Activated CD4-positive, alpha-beta T cell treated with anti-CD3 and anti-CD28 coated beads for 36 hours (primary cell): ENCODE measurements at regions of chr17 and their contacts with region 1.

Region 1: DNA sequence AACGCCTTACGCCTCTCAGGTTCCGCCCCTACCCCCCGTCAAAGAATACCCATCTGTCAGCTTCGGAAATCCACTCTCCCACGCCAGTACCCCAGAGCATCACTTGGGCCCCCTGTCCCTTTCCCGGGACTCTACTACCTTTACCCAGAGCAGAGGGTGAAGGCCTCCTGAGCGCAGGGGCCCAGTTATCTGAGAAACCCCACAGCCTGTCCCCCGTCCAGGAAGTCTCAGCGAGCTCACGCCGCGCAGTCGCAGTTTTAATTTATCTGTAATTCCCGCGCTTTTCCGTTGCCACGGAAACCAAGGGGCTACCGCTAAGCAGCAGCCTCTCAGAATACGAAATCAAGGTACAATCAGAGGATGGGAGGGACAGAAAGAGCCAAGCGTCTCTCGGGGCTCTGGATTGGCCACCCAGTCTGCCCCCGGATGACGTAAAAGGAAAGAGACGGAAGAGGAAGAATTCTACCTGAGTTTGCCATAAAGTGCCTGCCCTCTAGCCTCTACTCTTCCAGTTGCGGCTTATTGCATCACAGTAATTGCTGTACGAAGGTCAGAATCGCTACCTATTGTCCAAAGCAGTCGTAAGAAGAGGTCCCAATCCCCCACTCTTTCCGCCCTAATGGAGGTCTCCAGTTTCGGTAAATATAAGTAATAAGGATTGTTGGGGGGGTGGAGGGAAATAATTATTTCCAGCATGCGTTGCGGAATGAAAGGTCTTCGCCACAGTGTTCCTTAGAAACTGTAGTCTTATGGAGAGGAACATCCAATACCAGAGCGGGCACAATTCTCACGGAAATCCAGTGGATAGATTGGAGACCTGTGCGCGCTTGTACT is at the start of gene BRCA1:
- DNase-seq: peak; percentile 97
- ATAC-seq: peak; percentile 99
- H3K4me3 Mint-ChIP-seq: peak within 1 kb of the TSS; percentile 99
- H3K27ac Mint-ChIP-seq: peak within 1 kb of the TSS; percentile 99
- H3K4me1 Mint-ChIP-seq: peaks cover 19% of the 10 kb centered on the region
- H3K27me3 Mint-ChIP-seq: no peaks in the 10 kb centered on the region
- total RNA-seq, gene BRCA1: 99.9 to 115 TPM

Region 2: DNA sequence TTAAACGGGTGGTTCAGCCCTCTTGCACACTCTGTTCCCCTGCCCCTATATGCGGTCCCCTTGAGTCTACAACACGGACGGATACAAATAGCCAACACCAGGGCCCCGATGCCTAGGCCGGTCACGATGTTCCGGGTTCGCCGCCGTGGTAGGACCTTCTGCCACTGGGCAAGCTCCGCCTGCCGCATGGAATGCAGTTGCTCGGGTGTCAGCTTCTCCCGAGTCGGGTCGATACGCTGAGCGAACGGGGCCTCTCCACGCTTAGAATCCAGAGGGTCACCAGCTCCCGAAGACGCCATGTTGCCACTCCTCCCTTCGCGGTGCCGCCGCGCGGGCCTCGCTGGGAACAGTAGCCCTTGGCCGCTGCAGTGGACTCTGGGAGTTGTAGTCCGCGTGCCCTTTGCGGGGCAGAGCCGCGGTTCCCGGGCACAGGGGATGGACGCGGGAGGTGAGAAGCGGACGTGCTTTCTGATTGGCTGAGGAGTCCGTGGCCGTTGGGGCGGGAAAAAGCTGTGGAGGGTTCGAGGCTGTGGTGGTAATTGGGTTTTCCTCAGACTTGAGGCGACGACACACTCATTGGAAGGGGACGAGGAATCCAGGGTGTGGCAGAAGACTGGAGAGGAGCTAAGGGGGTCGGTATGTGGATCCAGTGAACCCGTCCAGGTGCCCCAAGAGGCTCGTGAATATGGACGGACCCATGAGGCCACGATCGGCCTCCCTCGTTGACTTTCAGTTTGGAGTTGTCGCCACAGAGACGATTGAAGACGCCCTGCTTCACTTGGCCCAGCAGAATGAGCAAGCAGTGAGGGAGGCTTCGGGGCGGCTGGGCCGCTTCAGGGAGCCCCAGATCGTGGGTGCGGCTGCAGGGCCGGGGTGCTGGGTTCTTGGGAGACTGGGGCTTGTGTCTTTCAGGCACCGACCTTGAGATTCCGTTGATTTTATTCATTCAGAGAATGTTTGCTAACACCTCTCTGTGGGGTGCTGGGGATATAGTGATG is 326.7 kb before region 1 on chr17 and contains the starts of genes CNTD1 and COA3:
- CTCF ChIA-PET with region 1: no interaction called
- POLR2A ChIA-PET with region 1: no interaction called
- intact Hi-C with region 1: loop called in 1 of 2 experiments (anchors 1 kb)
- DNase-seq: peak; percentile 92
- ATAC-seq: peak; percentile 100
- H3K4me3 Mint-ChIP-seq: peak within 1 kb of the TSS; percentile 87
- H3K27ac Mint-ChIP-seq: peak within 1 kb of the TSS; percentile 58
- H3K4me1 Mint-ChIP-seq: peaks cover 16% of the 10 kb centered on the region
- H3K27me3 Mint-ChIP-seq: no peaks in the 10 kb centered on the region
- total RNA-seq, gene CNTD1: not detected
- total RNA-seq, gene COA3: 30.1 to 31.4 TPM

Region 3: GRCh38 chr17:42832974-42833766 is 292.2 kb before region 1 on chr17 and contains the start of gene PSME3:
- CTCF ChIA-PET with region 1: no interaction called
- POLR2A ChIA-PET with region 1: no interaction called
- intact Hi-C with region 1: loop called in 1 of 2 experiments (anchors 1 kb)
- DNase-seq: peak; percentile 94
- ATAC-seq: peak; percentile 90
- H3K4me3 Mint-ChIP-seq: peak within 1 kb of the TSS; percentile 96
- H3K27ac Mint-ChIP-seq: peak within 1 kb of the TSS; percentile 98
- H3K4me1 Mint-ChIP-seq: peaks cover 18% of the 10 kb centered on the region
- H3K27me3 Mint-ChIP-seq: no peaks in the 10 kb centered on the region
- total RNA-seq, gene PSME3: 116 to 118 TPM

Region 4: GRCh38 chr17:42964161-42964932 is 161.0 kb before region 1 on chr17 and contains the start of gene AARSD1:
- CTCF ChIA-PET with region 1: no interaction called
- POLR2A ChIA-PET with region 1: no interaction called
- intact Hi-C with region 1: loop called in 1 of 2 experiments (anchors 1 kb)
- DNase-seq: peak; percentile 95
- ATAC-seq: peak; percentile 95
- H3K4me3 Mint-ChIP-seq: peak within 1 kb of the TSS; percentile 93
- H3K27ac Mint-ChIP-seq: peak within 1 kb of the TSS; percentile 90
- H3K4me1 Mint-ChIP-seq: peaks cover 22% of the 10 kb centered on the region
- H3K27me3 Mint-ChIP-seq: no peaks in the 10 kb centered on the region
- total RNA-seq, gene AARSD1: 40.8 to 58.6 TPM

Region 5: GRCh38 chr17:42980398-42981397 is 144.7 kb before region 1 on chr17 and contains the start of gene RUNDC1:
- CTCF ChIA-PET with region 1: no interaction called
- POLR2A ChIA-PET with region 1: no interaction called
- intact Hi-C with region 1: loop called in 1 of 2 experiments (anchors 1 kb)
- DNase-seq: peak; percentile 95
- ATAC-seq: peak; percentile 87
- H3K4me3 Mint-ChIP-seq: peak within 1 kb of the TSS; percentile 99
- H3K27ac Mint-ChIP-seq: peak within 1 kb of the TSS; percentile 98
- H3K4me1 Mint-ChIP-seq: peaks cover 32% of the 10 kb centered on the region
- H3K27me3 Mint-ChIP-seq: no peaks in the 10 kb centered on the region
- total RNA-seq, gene RUNDC1: 12.3 to 12.5 TPM

Region 6: GRCh38 chr17:43024407-43025289 is 100.7 kb before region 1 on chr17 and contains the start of gene RND2:
- CTCF ChIA-PET with region 1: no interaction called
- POLR2A ChIA-PET with region 1: no interaction called
- intact Hi-C with region 1: loop called in 1 of 2 experiments (anchors 1 kb)
- DNase-seq: peak; percentile 89
- ATAC-seq: peak; percentile 68
- H3K4me3 Mint-ChIP-seq: peak within 1 kb of the TSS; percentile 78
- H3K27ac Mint-ChIP-seq: peak within 1 kb of the TSS; percentile 71
- H3K4me1 Mint-ChIP-seq: peaks cover 26% of the 10 kb centered on the region
- H3K27me3 Mint-ChIP-seq: no peaks in the 10 kb centered on the region
- total RNA-seq, gene RND2: 0.05 to 0.16 TPM

Region 7: DNA sequence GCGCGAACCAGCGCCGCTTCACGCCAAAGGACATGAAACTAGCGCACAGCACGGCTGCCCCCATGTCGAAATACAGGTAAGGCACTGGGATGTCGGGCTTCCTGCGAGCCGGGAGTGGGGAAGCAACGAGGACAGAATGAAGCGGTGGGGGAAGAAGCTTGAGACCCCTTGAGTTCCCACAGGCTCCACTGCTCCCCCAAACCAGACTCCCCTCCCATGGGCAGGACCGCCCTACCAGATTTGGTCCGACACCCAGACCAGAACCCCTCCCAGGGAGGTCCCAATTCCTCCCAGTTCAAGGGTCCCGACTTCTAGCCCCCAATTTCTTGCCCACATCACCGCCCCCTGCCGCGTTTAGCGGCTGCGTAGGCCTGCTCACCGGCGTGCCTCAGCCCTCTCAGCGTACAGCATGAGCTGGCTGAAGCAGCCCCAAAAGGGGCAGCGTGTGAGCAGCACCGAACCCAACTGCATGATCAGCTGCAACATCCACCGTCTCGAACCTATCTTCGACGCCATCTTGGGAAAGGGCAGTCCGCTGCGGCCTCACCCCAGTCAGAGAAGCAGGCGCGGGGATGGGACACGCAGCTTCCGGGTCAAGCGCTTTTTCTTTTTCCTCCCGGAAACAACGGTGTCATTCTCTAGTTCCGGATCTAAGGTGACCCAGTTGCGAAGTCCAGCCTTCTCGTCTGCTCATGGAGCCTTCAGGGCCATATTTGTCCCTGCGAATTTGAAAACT is 889.3 kb after region 1 on chr17 and contains the start of gene TMEM101:
- CTCF ChIA-PET with region 1: no interaction called
- POLR2A ChIA-PET with region 1: no interaction called
- intact Hi-C with region 1: no loop called
- DNase-seq: peak; percentile 94
- ATAC-seq: peak; percentile 99
- H3K4me3 Mint-ChIP-seq: peak within 1 kb of the TSS; percentile 96
- H3K27ac Mint-ChIP-seq: peak within 1 kb of the TSS; percentile 96
- H3K4me1 Mint-ChIP-seq: peaks cover 7% of the 10 kb centered on the region
- H3K27me3 Mint-ChIP-seq: no peaks in the 10 kb centered on the region
- total RNA-seq, gene TMEM101: 17.6 to 22.7 TPM